ENCODE measurements at regions of chr11 and their contacts with region 1.

Region 1: GRCh38 chr11:7098235-7098832 is 9.5 kb downstream of the RBMXL2 start:
- DNase-seq: no peak
- H3K4me3 ChIP-seq: no peak overlapping the region
- H3K27ac ChIP-seq: no peak overlapping the region
- H3K4me1 ChIP-seq: no peaks in the 10 kb centered on the region
- H3K27me3 ChIP-seq: no peaks in the 10 kb centered on the region
- CTCF ChIP-seq: peak; percentile 17 to 83 (median 57)
- POLR2A ChIP-seq: no peak

Region 2: GRCh38 chr11:6203327-6203726 is 895.0 kb before region 1 on chr11:
- intact Hi-C with region 1: no loop called
- DNase-seq: no peak
- H3K4me3 ChIP-seq: no peak overlapping the region
- H3K27ac ChIP-seq: no peak overlapping the region
- H3K4me1 ChIP-seq: no peaks in the 10 kb centered on the region
- H3K27me3 ChIP-seq: no peaks in the 10 kb centered on the region
- CTCF ChIP-seq: no peak
- POLR2A ChIP-seq: no peak

Region 3: GRCh38 chr11:7031471-7031871 is 66.9 kb before region 1 on chr11:
- intact Hi-C with region 1: no loop called
- DNase-seq: no peak
- H3K4me3 ChIP-seq: no peak overlapping the region
- H3K27ac ChIP-seq: no peak overlapping the region
- H3K4me1 ChIP-seq: no peaks in the 10 kb centered on the region
- H3K27me3 ChIP-seq: no peaks in the 10 kb centered on the region
- CTCF ChIP-seq: no peak
- POLR2A ChIP-seq: no peak

Region 4: DNA sequence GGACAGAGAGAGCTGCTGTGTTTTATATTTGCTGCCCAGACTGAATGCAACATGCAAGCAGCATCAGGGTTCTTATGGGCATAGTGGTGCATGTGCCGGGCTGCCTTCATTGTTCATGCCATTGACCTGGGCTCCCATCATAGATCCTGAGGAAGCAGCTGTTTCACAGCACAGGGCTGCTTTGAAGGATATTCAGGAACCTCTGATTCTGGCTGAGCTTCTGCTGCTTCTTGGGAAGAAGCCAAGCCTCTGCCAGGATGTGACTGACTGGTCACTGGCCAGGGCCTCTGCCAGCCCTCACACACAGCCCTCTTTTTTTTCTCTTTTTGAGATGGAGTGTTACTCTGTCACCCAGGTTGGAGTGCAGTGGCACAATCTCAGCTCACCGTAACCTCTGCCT is 531.7 kb after region 1 on chr11:
- intact Hi-C with region 1: no loop called
- DNase-seq: peak; percentile 77 to 83
- H3K4me3 ChIP-seq: no peak overlapping the region
- H3K27ac ChIP-seq: peak overlapping the region; percentile 4 to 43 (median 17)
- H3K4me1 ChIP-seq: peaks cover 0 to 6% of the 10 kb centered on the region in 2 donors
- H3K27me3 ChIP-seq: no peaks in the 10 kb centered on the region
- CTCF ChIP-seq: no peak
- POLR2A ChIP-seq: no peak

Region 5: GRCh38 chr11:7696424-7696823 is 598.1 kb after region 1 on chr11:
- intact Hi-C with region 1: loop called (anchors 5 kb)
- DNase-seq: no peak
- H3K4me3 ChIP-seq: no peak overlapping the region
- H3K27ac ChIP-seq: no peak overlapping the region
- H3K4me1 ChIP-seq: no peaks in the 10 kb centered on the region
- H3K27me3 ChIP-seq: no peaks in the 10 kb centered on the region
- CTCF ChIP-seq: no peak
- POLR2A ChIP-seq: no peak

Region 6: GRCh38 chr11:7986768-7987559 is 888.6 kb after region 1 on chr11 and contains the start of gene EIF3F:
- intact Hi-C with region 1: loop called (anchors 5 kb)
- DNase-seq: peak; percentile 88 to 90
- H3K4me3 ChIP-seq: peak within 1 kb of the TSS; percentile 42 to 92 (median 85)
- H3K27ac ChIP-seq: peak within 1 kb of the TSS in 2 of 3 donors; percentile 58 to 61
- H3K4me1 ChIP-seq: peaks cover 16 to 23% of the 10 kb centered on the region in 2 donors
- H3K27me3 ChIP-seq: no peaks in the 10 kb centered on the region
- CTCF ChIP-seq: peak; percentile 62 to 92 (median 84)
- POLR2A ChIP-seq: peak in 1 of 2 donors; percentile 55
- total RNA-seq, gene EIF3F: 187 to 263 (median 231) TPM

Measured in thyroid gland (tissue), 4 donors.